Panc1 (cell line): ENCODE measurements at regions of chr11 and their contacts with region 1.

Region 1: DNA sequence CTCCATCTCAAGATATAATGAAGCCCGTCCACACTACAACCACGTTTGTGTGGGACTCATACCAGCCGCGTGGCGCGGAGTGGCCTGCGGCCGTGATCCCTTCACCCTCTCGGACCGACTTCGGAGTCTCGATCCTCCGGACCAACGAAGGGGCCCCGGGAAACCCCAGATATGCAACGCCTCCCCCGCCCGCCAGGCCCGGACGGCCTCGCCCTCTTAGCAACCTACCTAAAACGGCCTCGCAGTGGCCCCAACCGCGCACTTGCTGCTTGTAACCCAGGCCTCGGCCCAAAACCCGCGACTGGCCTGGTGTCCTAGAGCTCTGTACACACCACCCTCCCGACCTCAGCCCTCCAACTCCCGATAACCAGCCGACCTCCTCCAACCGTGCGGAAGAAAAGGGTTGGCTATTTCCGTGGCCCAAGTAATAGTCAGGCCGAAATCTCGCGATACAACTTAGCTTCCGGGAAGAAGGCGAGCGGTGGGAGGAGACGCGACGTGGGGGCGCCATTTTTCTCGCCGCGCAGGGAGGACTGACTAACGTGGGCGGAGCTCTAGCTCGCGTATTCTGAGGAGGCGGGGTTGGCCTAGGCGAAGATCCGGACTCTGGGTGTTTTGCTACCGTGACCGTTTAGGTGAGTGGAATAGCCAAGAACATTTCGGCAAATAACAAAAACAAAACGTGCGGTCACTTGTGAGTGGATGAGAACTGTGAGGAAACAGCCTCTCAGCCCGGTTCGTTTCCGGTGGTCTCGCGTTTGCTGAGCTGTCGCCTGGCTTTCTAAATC is at the starts of genes C11orf54 and TAF1D:
- DNase-seq: peak; percentile 93
- ATAC-seq: peak; percentile 88
- H3K4me3 ChIP-seq: peak within 1 kb of the TSS; percentile 72 to 84
- H3K27ac ChIP-seq: peak within 1 kb of the TSS; percentile 97
- H3K4me1 ChIP-seq: peaks cover 42% of the 10 kb centered on the region
- H3K27me3 ChIP-seq: no peaks in the 10 kb centered on the region
- CTCF ChIP-seq: no peak
- total RNA-seq, gene C11orf54: 31.0 TPM
- total RNA-seq, gene TAF1D: 165 TPM

Region 2: DNA sequence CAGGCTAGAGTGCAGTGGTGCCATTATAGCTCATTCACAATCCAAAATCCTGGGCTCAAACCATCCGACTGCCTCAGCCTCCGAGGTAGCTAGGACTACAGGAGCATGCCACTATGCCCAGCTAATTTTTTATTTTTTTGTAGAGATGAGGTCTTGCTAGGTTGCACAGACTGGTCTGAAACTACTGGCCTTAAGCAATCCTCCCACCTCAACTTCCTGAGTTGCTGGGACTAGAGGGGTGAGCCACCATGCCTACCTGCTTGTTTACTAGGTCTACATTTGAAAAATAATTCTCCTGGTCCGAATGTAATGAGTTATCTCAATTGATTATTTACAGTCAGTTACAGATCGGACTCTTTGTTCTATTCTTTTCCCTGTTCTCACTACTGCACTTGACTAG is 22.0 kb before region 1 on chr11:
- CTCF ChIA-PET with region 1: no interaction called
- POLR2A ChIA-PET with region 1: interaction called, 24 read pairs
- in situ Hi-C with region 1: no loop called
- intact Hi-C with region 1: no loop called
- DNase-seq: no peak
- ATAC-seq: no peak
- H3K4me3 ChIP-seq: no peak overlapping the region
- H3K27ac ChIP-seq: no peak overlapping the region
- H3K4me1 ChIP-seq: no peaks in the 10 kb centered on the region
- H3K27me3 ChIP-seq: no peaks in the 10 kb centered on the region
- CTCF ChIP-seq: no peak

Region 3: GRCh38 chr11:93784152-93784934 is 43.1 kb after region 1 on chr11 and contains the start of gene MED17:
- CTCF ChIA-PET with region 1: interaction called, 6 read pairs
- POLR2A ChIA-PET with region 1: interaction called, 19 read pairs
- in situ Hi-C with region 1: no loop called
- intact Hi-C with region 1: no loop called
- DNase-seq: peak; percentile 85
- ATAC-seq: peak; percentile 99
- H3K4me3 ChIP-seq: peak within 1 kb of the TSS; percentile 85 to 99
- H3K27ac ChIP-seq: peak within 1 kb of the TSS; percentile 93
- H3K4me1 ChIP-seq: peaks cover 7% of the 10 kb centered on the region
- H3K27me3 ChIP-seq: no peaks in the 10 kb centered on the region
- CTCF ChIP-seq: peak; percentile 62
- total RNA-seq, gene MED17: 52.4 TPM

Region 4: DNA sequence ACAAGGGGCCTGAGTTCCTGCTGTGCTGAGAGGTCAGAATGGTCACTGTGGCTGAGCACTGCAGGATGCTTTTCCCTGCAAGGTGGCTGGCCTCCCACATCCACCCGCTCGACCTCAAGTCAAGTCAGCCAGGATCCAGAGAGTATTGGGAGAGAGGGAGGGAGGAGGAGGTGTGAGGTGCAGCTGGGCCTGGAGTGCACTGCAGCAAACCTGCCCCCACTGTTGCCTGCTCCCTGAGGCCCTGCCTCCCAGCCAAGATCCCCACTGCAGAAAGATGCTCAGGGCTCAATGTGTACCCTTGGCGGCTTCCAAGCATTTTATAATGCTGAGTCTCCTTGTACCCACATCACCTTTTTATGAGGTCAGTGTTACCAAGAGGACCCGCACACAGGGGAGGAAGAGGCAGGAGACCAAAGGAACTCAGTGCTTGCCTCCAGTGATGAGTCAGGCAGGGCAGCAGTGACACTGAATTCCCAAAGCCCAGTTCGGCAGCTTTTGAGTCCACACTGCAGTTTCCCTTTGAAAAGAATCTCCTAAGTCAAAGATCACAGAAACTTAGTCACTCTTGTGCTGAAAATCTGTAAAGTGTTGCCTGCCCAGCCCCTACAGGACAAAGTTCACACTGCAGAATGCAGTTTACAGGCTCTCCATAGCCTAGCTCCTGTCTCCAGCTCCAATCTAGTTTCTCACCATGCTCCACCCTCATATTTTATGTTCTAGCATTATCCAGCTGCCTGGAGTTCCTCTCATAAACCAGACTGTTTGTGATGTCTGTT is 1351.4 kb after region 1 on chr11:
- CTCF ChIA-PET with region 1: no interaction called
- POLR2A ChIA-PET with region 1: interaction called, 11 read pairs
- in situ Hi-C with region 1: no loop called
- intact Hi-C with region 1: no loop called
- DNase-seq: peak; percentile 61
- ATAC-seq: no peak
- H3K4me3 ChIP-seq: no peak overlapping the region
- H3K27ac ChIP-seq: no peak overlapping the region
- H3K4me1 ChIP-seq: peaks cover 22% of the 10 kb centered on the region
- H3K27me3 ChIP-seq: no peaks in the 10 kb centered on the region
- CTCF ChIP-seq: peak; percentile 74